Activated B cell treated with CpG ODN at 0.5 μM for 24 hours (primary cell): ENCODE measurements at regions of chr17 and their contacts with region 1.

Region 1: GRCh38 chr17:82494236-82495055 is 25.1 kb upstream of the FOXK2 start:
- DNase-seq: peak; percentile 88
- ATAC-seq: peak; percentile 78
- H3K4me3 Mint-ChIP-seq: peak overlapping the region; percentile 75
- H3K27ac Mint-ChIP-seq: peak overlapping the region; percentile 93
- H3K4me1 Mint-ChIP-seq: peaks cover 26% of the 10 kb centered on the region
- H3K27me3 Mint-ChIP-seq: no peaks in the 10 kb centered on the region
- CTCF ChIP-seq: no peak

Region 2: GRCh38 chr17:82022981-82023374 is 471.5 kb before region 1 on chr17 and contains the start of gene LRRC45:
- CTCF ChIA-PET with region 1: no interaction called
- POLR2A ChIA-PET with region 1: no interaction called
- intact Hi-C with region 1: loop called (anchors 5 kb)
- DNase-seq: peak; percentile 97
- ATAC-seq: peak; percentile 96
- H3K4me3 Mint-ChIP-seq: peak within 1 kb of the TSS; percentile 85
- H3K27ac Mint-ChIP-seq: no peak within 1 kb of the TSS
- H3K4me1 Mint-ChIP-seq: peaks cover 22% of the 10 kb centered on the region
- H3K27me3 Mint-ChIP-seq: no peaks in the 10 kb centered on the region
- CTCF ChIP-seq: no peak
- total RNA-seq, gene LRRC45: 10.6 and 10.8 TPM in 2 replicates

Region 3: DNA sequence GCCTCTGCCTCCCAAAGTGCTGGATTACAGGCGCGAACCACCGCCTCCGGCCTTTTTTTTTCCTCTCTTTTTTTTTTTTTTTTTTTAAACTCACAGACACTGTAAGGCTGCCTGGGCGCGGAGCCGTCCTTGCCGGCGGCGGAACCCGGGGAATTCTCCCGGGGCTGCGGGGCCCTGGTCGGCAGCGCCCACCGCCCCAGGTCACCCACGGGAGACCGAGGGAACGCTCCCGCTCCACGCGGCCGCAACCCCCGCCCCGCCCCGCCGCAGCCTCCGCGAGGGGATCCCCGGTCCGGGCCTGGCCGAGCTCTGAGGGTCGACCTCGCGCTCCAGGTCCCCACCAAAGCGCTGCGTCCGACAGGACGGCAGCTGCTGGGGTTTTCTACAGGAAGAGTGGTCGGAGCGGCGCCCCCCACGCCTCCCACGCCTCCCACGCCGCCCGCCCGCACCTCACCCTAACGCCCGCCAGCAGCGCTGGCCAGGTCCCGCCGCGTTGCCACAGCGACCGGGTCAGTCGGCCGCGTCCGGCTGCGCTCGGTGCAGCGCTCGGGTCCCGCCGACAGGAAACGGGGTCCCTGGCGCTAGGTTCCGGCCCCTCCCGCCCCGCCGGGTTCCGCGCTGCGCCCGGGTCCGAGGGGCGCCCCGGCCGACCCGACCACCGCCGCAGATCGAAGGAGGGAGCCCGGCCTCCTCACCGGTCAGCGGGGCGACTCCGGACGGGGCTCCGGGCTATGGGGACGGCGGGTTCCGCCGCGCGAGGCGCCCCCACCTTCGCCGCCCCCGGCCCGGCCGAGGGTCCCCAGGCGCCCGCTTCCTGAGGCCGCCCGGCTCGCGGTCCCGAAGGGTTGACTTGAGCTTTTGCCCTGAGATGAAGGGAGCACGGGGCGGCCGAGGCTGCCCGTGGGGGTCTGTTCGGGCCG is 281.9 kb before region 1 on chr17 and contains the start of gene CCDC57:
- CTCF ChIA-PET with region 1: no interaction called
- POLR2A ChIA-PET with region 1: no interaction called
- intact Hi-C with region 1: no loop called
- DNase-seq: peak; percentile 78
- ATAC-seq: peak; percentile 73
- H3K4me3 Mint-ChIP-seq: peak within 1 kb of the TSS; percentile 84
- H3K27ac Mint-ChIP-seq: peak within 1 kb of the TSS; percentile 91
- H3K4me1 Mint-ChIP-seq: peaks cover 43% of the 10 kb centered on the region
- H3K27me3 Mint-ChIP-seq: no peaks in the 10 kb centered on the region
- CTCF ChIP-seq: no peak
- total RNA-seq, gene CCDC57: 56.6 TPM in 2 replicates

Region 4: GRCh38 chr17:82351716-82352488 is 142.5 kb before region 1 on chr17:
- CTCF ChIA-PET with region 1: no interaction called
- POLR2A ChIA-PET with region 1: no interaction called
- intact Hi-C with region 1: loop called (anchors 1 kb)
- DNase-seq: peak; percentile 67
- ATAC-seq: peak; percentile 91
- H3K4me3 Mint-ChIP-seq: no peak overlapping the region
- H3K27ac Mint-ChIP-seq: no peak overlapping the region
- H3K4me1 Mint-ChIP-seq: peaks cover 9% of the 10 kb centered on the region
- H3K27me3 Mint-ChIP-seq: peaks cover 13% of the 10 kb centered on the region
- CTCF ChIP-seq: peak; percentile 70

Region 5: GRCh38 chr17:82390860-82391435 is 103.5 kb before region 1 on chr17:
- CTCF ChIA-PET with region 1: no interaction called
- POLR2A ChIA-PET with region 1: no interaction called
- intact Hi-C with region 1: no loop called
- DNase-seq: no peak
- ATAC-seq: no peak
- H3K4me3 Mint-ChIP-seq: no peak overlapping the region
- H3K27ac Mint-ChIP-seq: no peak overlapping the region
- H3K4me1 Mint-ChIP-seq: no peaks in the 10 kb centered on the region
- H3K27me3 Mint-ChIP-seq: no peaks in the 10 kb centered on the region
- CTCF ChIP-seq: no peak

Region 6: DNA sequence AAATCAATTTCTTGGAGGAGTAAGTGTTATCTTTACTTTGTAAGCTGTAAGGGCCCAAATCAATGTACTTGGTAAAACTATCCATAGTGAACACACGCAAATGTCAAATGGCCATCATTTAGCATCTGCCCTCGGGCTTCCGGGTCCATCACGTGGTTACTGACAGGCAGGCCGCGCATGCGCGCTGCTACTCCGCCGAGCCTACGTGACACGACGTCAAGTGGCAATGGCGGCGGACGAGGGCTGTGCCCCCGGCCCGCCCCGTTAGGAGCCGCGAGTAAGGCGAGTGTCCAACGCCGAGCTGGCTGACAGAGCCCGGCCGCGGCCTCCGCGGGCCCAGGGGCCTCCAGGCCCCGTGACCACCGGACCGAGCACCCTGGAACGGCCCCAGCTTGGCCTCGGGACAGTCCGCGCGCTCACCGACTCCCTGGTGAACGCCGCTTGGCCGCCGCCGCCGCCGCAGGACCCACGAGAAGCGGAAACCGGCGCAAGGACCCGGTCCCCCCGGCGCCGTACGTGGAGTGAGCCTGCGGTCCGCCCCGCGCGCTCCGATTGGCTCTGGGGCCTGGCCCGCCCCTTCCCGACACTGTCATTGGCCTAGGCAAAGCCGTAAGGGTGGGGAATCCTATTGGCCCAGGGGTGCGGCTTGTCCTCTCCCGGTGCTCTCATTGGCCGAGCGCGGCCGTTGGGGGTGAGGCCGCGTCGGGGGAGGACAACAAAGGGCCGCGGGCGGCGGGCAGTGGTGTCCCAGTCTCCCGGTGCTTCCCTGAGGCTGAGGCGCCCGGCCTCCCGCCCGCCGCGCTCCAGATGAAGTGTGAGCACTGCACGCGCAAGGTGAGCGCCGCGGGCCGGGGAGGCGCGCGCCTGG is 36.2 kb before region 1 on chr17 and contains the start of gene NARF:
- CTCF ChIA-PET with region 1: no interaction called
- POLR2A ChIA-PET with region 1: interaction called, 13 read pairs
- intact Hi-C with region 1: loop called (anchors 1 kb)
- DNase-seq: peak; percentile 95
- ATAC-seq: peak; percentile 96
- H3K4me3 Mint-ChIP-seq: peak within 1 kb of the TSS; percentile 88
- H3K27ac Mint-ChIP-seq: peak within 1 kb of the TSS; percentile 96
- H3K4me1 Mint-ChIP-seq: peaks cover 19% of the 10 kb centered on the region
- H3K27me3 Mint-ChIP-seq: no peaks in the 10 kb centered on the region
- CTCF ChIP-seq: no peak
- total RNA-seq, gene NARF: 77.8 and 81.9 TPM in 2 replicates

Region 7: DNA sequence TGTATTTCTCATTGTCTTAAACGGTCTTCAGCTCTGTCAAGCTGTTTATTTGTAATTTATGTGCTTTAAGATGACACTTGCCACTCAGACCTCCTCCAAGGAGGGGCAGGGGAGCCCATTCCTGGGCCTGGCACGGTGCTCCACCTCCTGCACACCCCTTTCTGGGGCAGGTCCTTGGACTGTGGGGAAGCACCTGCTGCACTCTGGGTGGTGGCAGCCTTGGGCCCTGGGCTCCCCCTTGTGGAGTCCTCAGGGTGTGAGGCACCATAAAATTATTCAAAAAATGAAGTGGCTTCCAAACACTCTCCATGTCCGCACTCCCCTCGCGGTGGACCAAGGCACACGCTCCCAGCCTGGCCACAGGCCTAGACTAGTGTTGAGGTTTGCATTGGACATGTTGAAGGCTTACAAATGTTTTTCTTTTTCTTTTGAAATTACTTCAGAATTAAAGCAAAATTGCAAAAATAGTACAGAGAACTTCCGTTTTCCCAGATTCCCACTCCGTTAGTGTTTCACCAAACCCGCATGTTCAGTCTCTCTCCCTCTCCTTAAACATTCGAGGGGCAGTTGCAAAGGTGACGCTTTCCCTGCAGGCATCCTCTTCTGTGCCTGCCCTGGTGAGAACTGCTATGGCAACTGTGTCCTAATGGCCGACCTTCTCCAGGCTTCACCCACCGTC is 57.5 kb after region 1 on chr17:
- CTCF ChIA-PET with region 1: interaction called, 5 read pairs
- POLR2A ChIA-PET with region 1: no interaction called
- intact Hi-C with region 1: loop called (anchors 1 kb)
- DNase-seq: peak; percentile 71
- ATAC-seq: peak; percentile 99
- H3K4me3 Mint-ChIP-seq: no peak overlapping the region
- H3K27ac Mint-ChIP-seq: no peak overlapping the region
- H3K4me1 Mint-ChIP-seq: peaks cover 49% of the 10 kb centered on the region
- H3K27me3 Mint-ChIP-seq: no peaks in the 10 kb centered on the region
- CTCF ChIP-seq: no peak

Region 8: DNA sequence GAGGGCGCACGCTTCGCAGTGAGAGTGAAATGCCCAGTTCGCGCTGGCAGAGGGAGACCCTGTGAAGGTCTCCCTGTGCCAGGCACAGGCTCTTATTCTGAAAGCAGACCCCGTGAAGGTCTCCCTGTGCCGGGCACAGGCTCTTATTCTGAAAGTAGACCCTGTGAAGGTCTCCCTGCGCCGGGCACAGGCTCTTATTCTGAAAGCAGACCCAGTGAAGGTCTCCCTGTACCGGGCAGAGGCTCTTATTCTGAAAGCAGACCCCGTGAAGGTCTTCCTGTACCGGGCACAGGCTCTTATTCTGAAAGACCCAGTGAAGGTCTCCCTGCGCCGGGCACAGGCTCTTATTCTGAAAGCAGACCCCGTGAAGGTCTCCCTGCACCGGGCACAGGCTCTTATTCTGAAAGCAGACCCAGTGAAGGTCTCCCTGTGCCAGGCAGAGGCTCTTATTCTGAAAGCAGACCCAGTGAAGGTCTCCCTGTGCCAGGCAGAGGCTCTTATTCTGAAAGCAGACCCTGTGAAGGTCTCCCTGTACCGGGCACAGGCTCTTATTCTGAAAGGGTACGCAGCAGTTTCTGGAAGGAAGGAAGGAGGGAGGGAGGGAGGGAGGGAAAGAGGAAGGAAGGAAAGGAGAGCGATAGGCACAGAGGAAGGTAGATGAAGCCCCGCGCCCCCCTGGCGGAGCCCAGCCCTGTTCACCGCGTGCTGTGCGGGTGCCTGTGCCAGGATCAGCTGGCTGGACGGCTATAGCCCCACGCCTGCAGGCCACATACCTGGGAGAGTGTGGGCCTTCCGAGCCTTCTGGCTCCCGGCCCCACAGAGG is 98.5 kb after region 1 on chr17:
- CTCF ChIA-PET with region 1: no interaction called
- POLR2A ChIA-PET with region 1: no interaction called
- intact Hi-C with region 1: no loop called
- DNase-seq: peak; percentile 43
- ATAC-seq: peak; percentile 61
- H3K4me3 Mint-ChIP-seq: peak overlapping the region; percentile 72
- H3K27ac Mint-ChIP-seq: peak overlapping the region; percentile 85
- H3K4me1 Mint-ChIP-seq: peaks cover 51% of the 10 kb centered on the region
- H3K27me3 Mint-ChIP-seq: no peaks in the 10 kb centered on the region
- CTCF ChIP-seq: no peak